OCI-LY7 (cell line): ENCODE measurements at regions of chr18 and their contacts with region 1.

Region 1: DNA sequence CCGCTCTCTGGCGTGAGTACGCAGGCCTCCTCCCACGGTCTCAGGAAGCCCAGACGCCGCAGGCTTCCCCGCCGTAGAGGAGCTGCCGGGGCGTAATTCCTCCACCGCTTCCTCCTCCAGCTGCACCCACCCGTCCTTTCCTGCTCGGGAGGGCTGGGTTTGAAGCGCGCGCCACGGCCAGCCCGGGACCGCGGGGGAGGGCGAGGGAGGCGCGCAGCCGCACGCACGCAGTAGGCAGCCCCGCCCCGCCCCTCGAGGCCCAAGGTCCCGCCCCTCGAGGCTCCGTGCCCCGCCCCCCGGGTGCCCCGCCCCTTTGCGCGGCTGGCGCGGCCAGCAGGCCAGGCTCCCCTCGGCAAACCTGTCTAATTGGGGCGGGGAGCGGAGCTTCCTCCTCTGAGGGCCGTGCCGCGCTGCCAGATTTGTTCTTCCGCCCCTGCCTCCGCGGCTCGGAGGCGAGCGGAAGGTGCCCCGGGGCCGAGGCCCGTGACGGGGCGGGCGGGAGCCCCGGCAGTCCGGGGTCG is at the start of gene MALT1:
- DNase-seq: peak; percentile 90
- H3K4me3 ChIP-seq: peak within 1 kb of the TSS; percentile 78
- H3K27ac ChIP-seq: peak within 1 kb of the TSS; percentile 74
- H3K4me1 ChIP-seq: peaks cover 17% of the 10 kb centered on the region
- CTCF ChIP-seq: no peak
- total RNA-seq, gene MALT1: 14.4 and 15.5 TPM in 2 replicates

Region 2: DNA sequence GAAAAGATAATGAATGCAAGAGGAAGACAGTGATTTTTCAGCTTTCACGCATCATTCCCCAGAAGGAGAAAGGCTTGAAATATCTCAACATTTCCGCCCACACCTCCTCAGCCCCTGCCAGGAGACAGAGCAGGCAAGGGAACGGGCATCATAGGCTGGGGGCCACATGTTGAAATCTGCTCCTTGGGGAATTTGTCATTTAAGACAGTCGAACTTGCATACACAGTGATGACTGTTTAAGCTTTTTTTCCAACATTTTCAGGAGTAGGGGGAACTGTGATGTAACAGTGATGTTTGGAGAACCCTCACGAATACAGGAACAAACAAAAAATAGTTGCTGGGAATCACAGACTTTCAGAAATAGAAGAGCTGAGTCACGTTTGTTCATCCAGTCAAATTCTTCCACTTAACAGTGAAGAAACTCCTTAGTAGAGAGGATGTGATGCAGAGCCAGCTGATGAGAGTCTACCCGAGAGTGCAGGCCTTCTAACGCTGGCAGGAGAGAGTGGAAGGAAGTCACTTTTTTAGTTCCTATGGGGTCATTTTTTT is 309.1 kb before region 1 on chr18:
- CTCF ChIA-PET with region 1: no interaction called
- POLR2A ChIA-PET with region 1: no interaction called
- intact Hi-C with region 1: no loop called
- DNase-seq: no peak
- H3K4me3 ChIP-seq: no peak overlapping the region
- H3K27ac ChIP-seq: no peak overlapping the region
- H3K4me1 ChIP-seq: no peaks in the 10 kb centered on the region
- CTCF ChIP-seq: no peak

Region 3: DNA sequence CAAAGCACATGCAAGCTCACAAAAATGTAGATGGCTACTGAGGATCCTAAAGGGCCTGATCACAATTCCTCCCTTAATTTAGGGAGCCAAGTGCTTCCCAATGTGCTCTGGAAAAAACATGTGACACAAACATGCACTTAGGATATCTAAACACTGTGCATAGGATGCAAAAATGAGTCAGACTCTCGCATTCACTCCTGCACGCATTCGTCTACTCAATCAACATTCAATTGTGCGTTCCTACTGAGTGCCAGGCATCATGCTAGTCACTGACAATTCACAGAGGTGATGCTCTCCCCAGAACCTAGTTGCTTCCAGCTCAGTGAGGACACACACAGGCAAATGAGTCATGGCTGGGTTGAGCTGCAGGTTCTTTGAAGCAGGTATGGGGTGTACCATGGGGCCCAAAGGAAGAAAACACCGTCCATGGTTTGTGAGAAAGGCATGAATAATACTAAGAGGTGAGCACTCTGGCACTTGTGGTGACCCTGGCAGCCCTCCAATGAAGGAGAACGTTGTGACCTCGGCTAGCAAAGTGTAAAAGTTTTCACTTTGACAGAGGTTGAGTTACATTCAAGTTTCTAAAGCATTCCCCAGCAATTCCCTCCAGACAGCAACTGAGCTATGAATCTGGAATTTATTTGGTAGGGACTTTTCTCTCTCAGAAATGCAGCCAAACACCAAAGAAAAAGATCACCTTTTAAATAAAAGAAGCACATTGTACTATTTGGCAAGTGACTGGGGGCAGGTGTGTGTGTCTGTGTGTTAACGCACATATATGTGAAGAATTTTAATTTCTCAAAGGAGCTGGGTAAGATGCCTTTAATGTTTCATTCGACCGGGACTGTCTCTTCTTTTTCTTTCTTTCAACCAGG is 215.6 kb before region 1 on chr18:
- CTCF ChIA-PET with region 1: no interaction called
- POLR2A ChIA-PET with region 1: no interaction called
- intact Hi-C with region 1: no loop called
- DNase-seq: no peak
- H3K4me3 ChIP-seq: no peak overlapping the region
- H3K27ac ChIP-seq: no peak overlapping the region
- H3K4me1 ChIP-seq: no peaks in the 10 kb centered on the region
- CTCF ChIP-seq: no peak

Region 4: DNA sequence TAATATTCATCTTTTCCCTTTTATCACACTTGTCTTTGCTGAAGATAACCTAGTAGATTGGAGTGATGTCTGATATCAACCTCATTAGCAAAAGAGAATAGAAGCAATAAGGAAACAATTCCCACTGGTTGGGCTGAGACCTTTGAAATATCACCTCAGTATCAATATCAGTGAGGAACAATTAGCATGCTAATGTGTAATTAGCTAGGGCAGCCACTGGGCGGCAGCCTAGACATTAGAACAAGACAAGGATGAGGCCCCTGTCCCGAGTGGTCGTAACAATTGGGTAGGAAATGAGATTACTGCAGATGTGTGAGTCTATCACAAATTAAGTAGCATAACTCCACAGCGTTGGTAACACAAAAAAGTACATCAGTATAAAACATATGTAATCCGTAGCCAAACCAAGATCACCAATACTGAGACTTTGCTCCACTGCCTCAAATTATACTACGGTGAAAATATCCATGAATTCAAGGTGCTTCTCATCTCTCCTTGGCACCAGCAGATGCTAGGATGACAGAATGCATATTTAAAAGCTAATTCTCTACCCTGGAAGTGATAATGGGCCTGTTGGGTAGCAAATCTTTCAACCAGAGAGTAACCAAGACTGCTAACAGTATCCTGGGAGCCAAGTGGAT is 141.3 kb before region 1 on chr18:
- CTCF ChIA-PET with region 1: no interaction called
- POLR2A ChIA-PET with region 1: interaction called, 10 read pairs
- intact Hi-C with region 1: loop called (anchors 5 kb)
- DNase-seq: peak; percentile 61
- H3K4me3 ChIP-seq: no peak overlapping the region
- H3K27ac ChIP-seq: no peak overlapping the region
- H3K4me1 ChIP-seq: peaks cover 27% of the 10 kb centered on the region
- CTCF ChIP-seq: peak; percentile 82

Region 5: GRCh38 chr18:58657494-58657893 is 13.7 kb before region 1 on chr18:
- CTCF ChIA-PET with region 1: interaction called, 3 read pairs
- POLR2A ChIA-PET with region 1: interaction called, 20 read pairs
- intact Hi-C with region 1: no loop called
- DNase-seq: no peak
- H3K4me3 ChIP-seq: peak overlapping the region; percentile 41
- H3K27ac ChIP-seq: peak overlapping the region; percentile 79
- H3K4me1 ChIP-seq: peaks cover 51% of the 10 kb centered on the region
- CTCF ChIP-seq: no peak